Aorta (tissue), 5 donors: ENCODE measurements at regions of chr1 and their contacts with region 1.

Region 1: DNA sequence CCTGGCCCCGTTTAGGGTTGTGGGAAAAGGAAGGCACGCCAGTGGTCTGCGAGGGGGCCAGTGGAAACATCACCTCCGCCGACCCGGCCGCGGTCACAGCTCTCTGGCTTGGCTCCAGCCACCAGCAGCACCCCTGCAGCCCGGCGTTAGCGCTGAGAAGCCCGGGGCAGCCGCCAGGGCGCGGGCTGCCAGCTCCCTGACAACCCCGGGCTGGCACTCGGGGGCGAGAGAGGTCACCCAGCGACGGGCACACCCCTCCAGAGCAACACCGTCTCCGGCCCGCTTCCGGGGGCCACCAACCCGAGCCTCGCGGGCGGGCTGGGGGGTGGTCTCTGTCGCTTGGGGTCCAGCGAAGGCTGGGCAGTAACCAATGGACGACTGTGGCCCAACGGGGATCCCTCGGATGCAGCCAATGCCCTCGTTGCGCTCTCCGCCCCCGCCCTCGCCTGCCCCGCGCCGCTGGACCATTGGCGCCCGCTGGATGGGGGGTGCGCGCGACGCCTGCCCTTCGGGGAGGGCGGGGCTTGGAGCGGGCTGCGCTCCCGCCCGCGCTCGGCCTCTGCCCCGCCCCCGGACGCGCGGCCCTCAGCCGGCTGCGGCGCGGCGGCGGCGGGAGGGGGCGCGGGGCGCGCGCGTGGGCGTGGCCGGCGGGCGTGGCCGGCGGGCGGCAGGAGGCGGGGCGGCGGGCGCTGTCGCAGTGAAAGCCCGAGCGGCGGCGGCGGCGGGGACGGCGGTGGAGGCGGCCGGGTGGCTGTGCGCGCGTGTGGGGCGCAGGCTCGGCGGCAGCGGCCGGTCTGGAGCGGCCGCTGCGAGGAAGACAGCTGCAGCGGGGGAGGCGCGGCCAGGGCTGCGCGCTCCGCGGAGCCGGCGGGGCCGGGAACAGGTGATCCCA is at the start of gene MAN1C1:
- DNase-seq: peak; percentile 93 to 96
- ATAC-seq: peak; percentile 93
- H3K4me3 ChIP-seq: peak within 1 kb of the TSS; percentile 58 to 79
- H3K27ac ChIP-seq: peak within 1 kb of the TSS in 1 of 2 donors; percentile 53
- H3K4me1 ChIP-seq: peaks cover 0 to 6% of the 10 kb centered on the region in 2 donors
- H3K27me3 ChIP-seq: no peaks in the 10 kb centered on the region
- total RNA-seq, gene MAN1C1: 13.5 to 32.2 TPM

Region 2: GRCh38 chr1:25642574-25643108 is 26.3 kb after region 1 on chr1:
- intact Hi-C with region 1: no loop called
- DNase-seq: peak in 1 of 2 donors; percentile 72
- ATAC-seq: peak; percentile 26
- H3K4me3 ChIP-seq: no peak overlapping the region
- H3K27ac ChIP-seq: no peak overlapping the region
- H3K4me1 ChIP-seq: no peaks in the 10 kb centered on the region
- H3K27me3 ChIP-seq: no peaks in the 10 kb centered on the region

Region 3: DNA sequence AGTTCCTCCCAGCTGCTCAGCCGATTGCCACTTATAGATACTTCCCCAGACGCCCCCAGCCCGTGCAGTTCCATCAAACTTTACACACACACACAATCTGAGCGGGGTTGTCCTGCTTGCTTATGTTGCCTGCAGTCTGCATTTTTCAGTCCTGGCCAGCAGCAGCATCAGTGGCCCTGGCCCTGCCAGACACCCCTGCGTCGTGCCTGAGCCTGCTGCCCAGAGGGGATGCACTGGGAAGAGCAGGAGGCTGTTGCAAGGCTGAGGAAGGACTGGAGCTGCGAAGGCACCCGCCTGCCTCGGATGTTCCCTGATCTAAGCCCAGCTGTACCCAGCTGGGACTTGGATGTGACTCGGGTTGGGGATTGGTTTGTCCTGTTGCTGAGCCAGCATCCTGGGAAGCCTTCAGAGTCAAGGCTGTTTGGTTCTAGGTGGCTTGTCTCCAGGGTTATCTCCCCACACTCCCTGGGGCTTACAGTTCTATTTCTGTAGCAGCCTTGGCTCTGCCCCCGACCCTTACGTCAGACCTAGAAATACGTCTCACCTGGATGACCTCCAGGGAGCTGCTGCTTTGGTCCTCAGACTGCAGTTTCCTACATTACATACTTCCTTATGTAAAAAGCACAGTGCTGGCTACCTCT is 42.6 kb after region 1 on chr1:
- intact Hi-C with region 1: loop called in 1 of 2 experiments (anchors 5 kb)
- DNase-seq: peak in 1 of 2 donors; percentile 55
- ATAC-seq: peak; percentile 44
- H3K4me3 ChIP-seq: no peak overlapping the region
- H3K27ac ChIP-seq: no peak overlapping the region
- H3K4me1 ChIP-seq: no peaks in the 10 kb centered on the region
- H3K27me3 ChIP-seq: no peaks in the 10 kb centered on the region

Region 4: GRCh38 chr1:25695090-25695770 is 78.9 kb after region 1 on chr1:
- intact Hi-C with region 1: loop called (anchors 2 to 5 kb)
- DNase-seq: peak; percentile 92 to 93
- ATAC-seq: peak; percentile 92
- H3K4me3 ChIP-seq: no peak overlapping the region
- H3K27ac ChIP-seq: peak overlapping the region in 1 of 2 donors; percentile 87
- H3K4me1 ChIP-seq: peaks cover 3 to 4% of the 10 kb centered on the region in 2 donors
- H3K27me3 ChIP-seq: no peaks in the 10 kb centered on the region

Region 5: GRCh38 chr1:25743826-25744581 is 127.7 kb after region 1 on chr1:
- intact Hi-C with region 1: loop called (anchors 5 kb)
- DNase-seq: peak; percentile 72 to 77
- ATAC-seq: peak; percentile 80
- H3K4me3 ChIP-seq: no peak overlapping the region
- H3K27ac ChIP-seq: peak overlapping the region; percentile 8 to 95
- H3K4me1 ChIP-seq: no peaks in the 10 kb centered on the region
- H3K27me3 ChIP-seq: no peaks in the 10 kb centered on the region